Activated CD4-positive, alpha-beta memory T cell treated with anti-CD3 and anti-CD28 coated beads for 36 hours (primary cell): ENCODE measurements at regions of chr18 and their contacts with region 1.

Region 1: GRCh38 chr18:50356036-50356945 is 18.6 kb upstream of the SKA1 start:
- DNase-seq: no peak
- H3K4me3 Mint-ChIP-seq: no peak overlapping the region
- H3K27ac Mint-ChIP-seq: no peak overlapping the region
- H3K4me1 Mint-ChIP-seq: peaks cover 10% of the 10 kb centered on the region
- H3K27me3 Mint-ChIP-seq: peaks cover 14% of the 10 kb centered on the region

Region 2: DNA sequence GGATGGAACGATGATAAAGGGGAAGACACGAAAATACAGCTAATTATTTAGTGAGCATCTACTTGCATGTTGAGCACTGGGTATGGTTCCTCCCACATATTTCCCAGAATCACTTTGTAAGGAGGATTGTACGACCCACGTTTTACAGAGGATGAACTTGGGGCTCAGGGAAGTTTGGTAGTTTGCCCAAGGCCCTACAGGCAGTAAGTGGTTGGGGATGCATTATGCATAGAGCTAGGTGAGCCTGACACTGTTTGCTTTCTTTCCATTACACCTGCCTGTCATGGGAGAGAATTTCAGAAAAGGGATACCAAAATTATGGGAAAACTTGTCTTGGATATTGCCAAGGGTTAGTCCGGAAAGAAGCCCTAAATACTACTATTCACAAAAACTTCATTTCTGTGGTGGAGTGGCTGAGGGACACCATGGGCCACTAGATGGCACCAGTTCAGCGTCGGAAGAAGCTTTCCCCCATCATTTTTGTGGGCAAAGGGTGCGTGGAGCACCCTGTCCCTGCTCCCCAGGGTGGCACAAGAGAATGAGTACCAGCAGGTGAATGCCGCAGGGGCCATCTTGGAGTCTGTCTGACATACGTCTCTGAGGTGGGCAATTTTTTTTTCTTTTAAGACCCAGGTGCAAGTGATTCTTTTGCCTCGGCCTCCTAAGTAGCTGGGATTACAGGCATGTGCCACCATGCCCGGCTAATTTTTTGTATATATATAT is 845.7 kb before region 1 on chr18:
- CTCF ChIA-PET with region 1: interaction called, 17 read pairs
- POLR2A ChIA-PET with region 1: no interaction called
- intact Hi-C with region 1: no loop called
- DNase-seq: peak; percentile 61
- H3K4me3 Mint-ChIP-seq: no peak overlapping the region
- H3K27ac Mint-ChIP-seq: no peak overlapping the region
- H3K4me1 Mint-ChIP-seq: no peaks in the 10 kb centered on the region
- H3K27me3 Mint-ChIP-seq: peaks cover 13% of the 10 kb centered on the region

Region 3: GRCh38 chr18:50170004-50170403 is 186.3 kb before region 1 on chr18:
- CTCF ChIA-PET with region 1: no interaction called
- POLR2A ChIA-PET with region 1: no interaction called
- intact Hi-C with region 1: no loop called
- DNase-seq: no peak
- H3K4me3 Mint-ChIP-seq: no peak overlapping the region
- H3K27ac Mint-ChIP-seq: no peak overlapping the region
- H3K4me1 Mint-ChIP-seq: no peaks in the 10 kb centered on the region
- H3K27me3 Mint-ChIP-seq: peaks cover 21% of the 10 kb centered on the region

Region 4: GRCh38 chr18:50203801-50204604 is 152.3 kb before region 1 on chr18:
- CTCF ChIA-PET with region 1: interaction called, 25 read pairs
- POLR2A ChIA-PET with region 1: no interaction called
- intact Hi-C with region 1: no loop called
- DNase-seq: peak; percentile 21
- H3K4me3 Mint-ChIP-seq: no peak overlapping the region
- H3K27ac Mint-ChIP-seq: no peak overlapping the region
- H3K4me1 Mint-ChIP-seq: peaks cover 9% of the 10 kb centered on the region
- H3K27me3 Mint-ChIP-seq: peaks cover 33% of the 10 kb centered on the region

Region 5: GRCh38 chr18:50266248-50266704 is 90.0 kb before region 1 on chr18 and contains the start of gene CFAP53:
- CTCF ChIA-PET with region 1: interaction called, 11 read pairs
- POLR2A ChIA-PET with region 1: no interaction called
- intact Hi-C with region 1: loop called (anchors 1 kb)
- DNase-seq: peak; percentile 93
- H3K4me3 Mint-ChIP-seq: peak within 1 kb of the TSS; percentile 79
- H3K27ac Mint-ChIP-seq: peak within 1 kb of the TSS; percentile 43
- H3K4me1 Mint-ChIP-seq: peaks cover 18% of the 10 kb centered on the region
- H3K27me3 Mint-ChIP-seq: no peaks in the 10 kb centered on the region
- total RNA-seq, gene CFAP53: 0.26 to 0.48 TPM

Region 6: GRCh38 chr18:50320719-50321118 is 35.6 kb before region 1 on chr18:
- CTCF ChIA-PET with region 1: interaction called, 11 read pairs
- POLR2A ChIA-PET with region 1: no interaction called
- intact Hi-C with region 1: no loop called
- DNase-seq: no peak
- H3K4me3 Mint-ChIP-seq: peak overlapping the region; percentile 44
- H3K27ac Mint-ChIP-seq: no peak overlapping the region
- H3K4me1 Mint-ChIP-seq: peaks cover 10% of the 10 kb centered on the region
- H3K27me3 Mint-ChIP-seq: peaks cover 5% of the 10 kb centered on the region

Region 7: DNA sequence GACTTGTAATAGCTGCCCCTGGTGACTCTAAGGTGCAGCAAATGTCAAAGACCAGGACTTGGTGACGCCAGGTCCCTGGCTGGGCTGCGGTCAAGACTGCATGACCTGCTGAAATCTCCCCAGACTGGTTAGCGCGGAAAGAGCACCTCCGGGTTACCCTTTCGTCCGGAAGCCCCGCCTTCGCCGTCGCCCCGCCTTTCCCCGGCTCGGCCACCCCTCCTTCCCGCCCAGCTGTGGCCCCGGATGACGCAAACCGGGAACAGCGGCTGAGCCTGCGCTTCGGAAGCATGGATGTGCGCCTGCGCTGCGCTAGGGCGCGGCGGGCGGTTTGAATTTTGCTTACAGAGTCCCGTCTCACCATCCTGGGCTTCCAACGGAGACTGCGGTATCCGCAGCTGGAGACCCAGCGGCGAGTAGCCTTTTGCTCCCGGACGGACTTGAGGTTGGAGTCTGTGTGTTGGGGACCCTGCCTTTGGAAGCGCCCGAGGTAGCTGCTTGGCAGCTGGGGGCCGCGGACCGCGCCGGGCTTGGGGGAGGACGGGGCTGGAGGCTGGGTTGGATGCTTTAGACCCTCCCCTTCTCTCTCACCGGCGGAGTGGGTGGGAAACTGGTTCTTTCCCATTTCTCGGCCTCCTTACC is 18.6 kb after region 1 on chr18 and contains the start of gene SKA1:
- CTCF ChIA-PET with region 1: interaction called, 12 read pairs
- POLR2A ChIA-PET with region 1: no interaction called
- intact Hi-C with region 1: loop called (anchors 1 kb)
- DNase-seq: peak; percentile 95
- H3K4me3 Mint-ChIP-seq: peak within 1 kb of the TSS; percentile 87
- H3K27ac Mint-ChIP-seq: peak within 1 kb of the TSS; percentile 77
- H3K4me1 Mint-ChIP-seq: no peaks in the 10 kb centered on the region
- H3K27me3 Mint-ChIP-seq: peaks cover 5% of the 10 kb centered on the region
- total RNA-seq, gene SKA1: 44.2 to 46.0 TPM

Region 8: GRCh38 chr18:51009072-51009471 is 652.8 kb after region 1 on chr18:
- CTCF ChIA-PET with region 1: no interaction called
- POLR2A ChIA-PET with region 1: no interaction called
- intact Hi-C with region 1: no loop called
- DNase-seq: no peak
- H3K4me3 Mint-ChIP-seq: no peak overlapping the region
- H3K27ac Mint-ChIP-seq: no peak overlapping the region
- H3K4me1 Mint-ChIP-seq: no peaks in the 10 kb centered on the region
- H3K27me3 Mint-ChIP-seq: no peaks in the 10 kb centered on the region